Activated CD4-positive, alpha-beta memory T cell treated with anti-CD3 and anti-CD28 coated beads, Interleukin-2, amount 10 ng/mL, durations not matched to agents 7 days and 5 days (primary cell): ENCODE measurements at regions of chr21 and their contacts with region 1.

Region 1: GRCh38 chr21:46635324-46636172 is at the start of gene PRMT2:
- DNase-seq: peak; percentile 98
- H3K4me3 Mint-ChIP-seq: peak within 1 kb of the TSS; percentile 89
- H3K27ac Mint-ChIP-seq: peak within 1 kb of the TSS; percentile 83
- H3K4me1 Mint-ChIP-seq: peaks cover 59% of the 10 kb centered on the region
- H3K27me3 Mint-ChIP-seq: peaks cover 4% of the 10 kb centered on the region
- total RNA-seq, gene PRMT2: 97.3 to 102 TPM

Region 2: GRCh38 chr21:46323227-46324128 is 312.1 kb before region 1 on chr21 and contains the start of gene C21orf58:
- CTCF ChIA-PET with region 1: interaction called, 3 read pairs
- POLR2A ChIA-PET with region 1: interaction called, 14 read pairs
- DNase-seq: peak; percentile 98
- H3K4me3 Mint-ChIP-seq: peak within 1 kb of the TSS; percentile 84
- H3K27ac Mint-ChIP-seq: peak within 1 kb of the TSS; percentile 93
- H3K4me1 Mint-ChIP-seq: peaks cover 45% of the 10 kb centered on the region
- H3K27me3 Mint-ChIP-seq: no peaks in the 10 kb centered on the region
- total RNA-seq, gene C21orf58: 47.7 to 49.4 TPM

Region 3: DNA sequence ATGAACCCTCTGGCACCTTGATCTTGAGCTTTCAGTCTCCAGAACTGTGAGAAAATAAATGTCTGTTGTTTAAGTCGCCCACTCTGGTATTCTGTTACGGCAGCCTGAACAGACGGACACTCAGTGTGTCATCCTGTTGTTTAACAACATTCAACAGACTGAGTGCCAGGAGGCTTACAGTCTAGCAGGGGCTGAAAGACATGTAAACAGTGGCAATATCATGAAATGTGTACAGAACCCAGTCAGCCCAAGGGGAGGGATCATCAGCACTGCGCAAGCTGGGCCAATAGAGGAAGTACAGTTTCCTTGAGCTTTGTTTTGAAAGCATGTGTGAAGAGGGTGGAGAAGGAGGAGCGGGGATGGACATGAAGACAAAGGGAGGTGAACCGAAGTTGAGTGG is 163.3 kb before region 1 on chr21:
- CTCF ChIA-PET with region 1: no interaction called
- POLR2A ChIA-PET with region 1: no interaction called
- DNase-seq: no peak
- H3K4me3 Mint-ChIP-seq: no peak overlapping the region
- H3K27ac Mint-ChIP-seq: no peak overlapping the region
- H3K4me1 Mint-ChIP-seq: peaks cover 27% of the 10 kb centered on the region
- H3K27me3 Mint-ChIP-seq: no peaks in the 10 kb centered on the region

Region 4: DNA sequence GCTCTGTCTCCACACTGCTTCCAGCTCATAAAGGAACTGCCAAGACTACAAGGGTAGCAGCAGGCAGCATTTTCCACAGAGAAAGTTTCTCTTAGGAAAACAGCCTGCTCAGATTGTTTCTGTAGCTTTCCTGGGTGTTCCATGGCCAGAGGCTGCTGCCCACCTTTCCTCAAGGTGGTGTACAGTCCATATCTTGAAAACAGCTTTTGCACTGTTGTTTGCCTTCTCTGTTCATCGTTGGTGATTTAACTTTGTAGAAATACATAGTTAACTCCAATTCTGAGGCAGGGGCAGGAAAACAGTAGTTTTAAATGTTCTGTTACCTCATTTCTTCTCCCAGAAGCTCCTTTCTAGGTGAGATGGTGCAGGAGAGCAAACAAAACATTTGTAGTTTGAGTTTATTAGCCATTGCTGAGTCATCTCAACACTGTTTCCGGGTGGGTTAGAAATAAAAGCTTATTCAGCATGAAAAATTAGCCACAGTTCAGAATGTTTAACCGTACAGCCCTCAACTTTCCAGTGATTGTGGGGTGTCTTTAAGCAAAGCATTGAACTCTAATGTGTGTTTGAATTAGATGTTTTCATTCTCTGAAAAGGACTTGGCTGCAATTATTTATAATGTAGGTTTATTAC is 135.2 kb before region 1 on chr21:
- CTCF ChIA-PET with region 1: interaction called, 6 read pairs
- POLR2A ChIA-PET with region 1: interaction called, 25 read pairs
- DNase-seq: no peak
- H3K4me3 Mint-ChIP-seq: no peak overlapping the region
- H3K27ac Mint-ChIP-seq: peak overlapping the region; percentile 78
- H3K4me1 Mint-ChIP-seq: peaks cover 56% of the 10 kb centered on the region
- H3K27me3 Mint-ChIP-seq: no peaks in the 10 kb centered on the region

Region 5: GRCh38 chr21:46559291-46559983 is 76.1 kb before region 1 on chr21:
- CTCF ChIA-PET with region 1: interaction called, 3 read pairs
- POLR2A ChIA-PET with region 1: interaction called, 52 read pairs
- DNase-seq: peak; percentile 65
- H3K4me3 Mint-ChIP-seq: peak overlapping the region; percentile 52
- H3K27ac Mint-ChIP-seq: peak overlapping the region; percentile 92
- H3K4me1 Mint-ChIP-seq: peaks cover 33% of the 10 kb centered on the region
- H3K27me3 Mint-ChIP-seq: no peaks in the 10 kb centered on the region

Region 6: DNA sequence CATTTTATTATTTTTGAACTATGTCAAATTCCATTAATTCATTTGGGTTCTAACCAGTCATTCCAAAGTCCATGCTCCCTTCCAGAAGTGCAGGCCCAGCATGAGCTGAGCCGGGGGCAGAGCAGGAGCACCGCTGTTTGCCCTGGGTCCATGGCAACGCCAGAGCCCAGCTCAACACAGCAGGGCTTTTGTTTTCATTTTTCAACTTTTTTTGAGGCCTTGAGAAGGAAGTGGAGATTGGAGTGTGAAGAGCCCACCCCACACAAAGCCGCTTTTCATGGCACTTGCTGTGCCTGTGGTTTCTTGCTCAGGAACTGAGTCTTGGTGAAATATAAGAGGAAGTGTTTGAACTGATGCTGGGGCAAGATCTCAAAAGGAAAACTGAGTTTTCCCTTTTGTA is 13.3 kb before region 1 on chr21:
- CTCF ChIA-PET with region 1: interaction called, 3 read pairs
- POLR2A ChIA-PET with region 1: interaction called, 24 read pairs
- DNase-seq: peak; percentile 43
- H3K4me3 Mint-ChIP-seq: no peak overlapping the region
- H3K27ac Mint-ChIP-seq: peak overlapping the region; percentile 70
- H3K4me1 Mint-ChIP-seq: peaks cover 30% of the 10 kb centered on the region
- H3K27me3 Mint-ChIP-seq: no peaks in the 10 kb centered on the region